Activated CD8-positive, alpha-beta T cell treated with anti-CD3 and anti-CD28 coated beads for 36 hours (primary cell): ENCODE measurements at regions of chr6 and their contacts with region 1.

Region 1: GRCh38 chr6:45486736-45487135 is 109.0 kb upstream of the SUPT3H start:
- DNase-seq: peak; percentile 55
- ATAC-seq: peak; percentile 90
- H3K4me3 Mint-ChIP-seq: peak overlapping the region; percentile 45
- H3K27ac Mint-ChIP-seq: peak overlapping the region; percentile 80
- H3K4me1 Mint-ChIP-seq: peaks cover 35% of the 10 kb centered on the region
- H3K27me3 Mint-ChIP-seq: no peaks in the 10 kb centered on the region
- CTCF ChIP-seq: no peak

Region 2: DNA sequence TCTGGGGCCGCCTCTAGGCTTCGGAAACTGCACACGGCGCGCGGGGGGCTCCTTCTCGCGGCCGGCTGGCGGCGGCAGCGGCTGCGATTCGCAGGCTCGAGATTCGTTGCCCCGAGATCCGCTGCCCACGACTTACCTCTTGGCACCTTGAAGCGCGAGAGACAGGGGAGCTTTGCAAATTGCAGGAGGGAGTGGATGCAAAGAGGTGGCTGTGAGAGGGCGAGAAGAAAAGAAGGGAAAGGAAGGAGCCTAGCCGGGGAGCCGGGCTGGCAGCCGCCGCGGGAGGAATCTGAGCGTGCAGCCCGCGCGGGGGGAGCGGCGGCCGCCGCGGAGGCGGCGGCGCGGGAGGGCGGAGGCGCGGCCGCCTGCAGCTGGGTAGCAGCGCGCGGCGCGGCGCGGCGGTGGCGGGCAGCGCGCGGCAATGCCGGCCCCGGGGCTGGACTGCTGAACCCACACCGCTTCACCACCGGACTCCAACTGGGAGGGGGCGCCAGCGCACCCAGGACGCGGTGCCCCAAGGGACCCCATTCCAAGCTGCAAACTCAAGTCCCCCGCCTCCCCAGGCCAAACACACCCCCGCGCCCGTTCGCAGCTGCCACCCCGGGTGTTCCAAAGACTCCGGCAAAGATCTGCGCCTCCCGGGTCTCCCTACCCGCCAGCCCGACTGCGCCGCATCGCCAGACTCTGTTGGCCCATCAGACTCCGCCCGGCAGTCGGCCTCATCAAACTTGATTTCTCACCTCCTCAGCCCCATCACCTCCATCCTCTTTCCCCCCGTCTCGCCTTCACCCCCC is 64.8 kb before region 1 on chr6:
- CTCF ChIA-PET with region 1: interaction called, 6 read pairs
- POLR2A ChIA-PET with region 1: no interaction called
- intact Hi-C with region 1: loop called (anchors 5 kb)
- DNase-seq: peak; percentile 71
- ATAC-seq: peak; percentile 25
- H3K4me3 Mint-ChIP-seq: peak overlapping the region; percentile 94
- H3K27ac Mint-ChIP-seq: peak overlapping the region; percentile 95
- H3K4me1 Mint-ChIP-seq: peaks cover 29% of the 10 kb centered on the region
- H3K27me3 Mint-ChIP-seq: no peaks in the 10 kb centered on the region
- CTCF ChIP-seq: no peak

Region 3: DNA sequence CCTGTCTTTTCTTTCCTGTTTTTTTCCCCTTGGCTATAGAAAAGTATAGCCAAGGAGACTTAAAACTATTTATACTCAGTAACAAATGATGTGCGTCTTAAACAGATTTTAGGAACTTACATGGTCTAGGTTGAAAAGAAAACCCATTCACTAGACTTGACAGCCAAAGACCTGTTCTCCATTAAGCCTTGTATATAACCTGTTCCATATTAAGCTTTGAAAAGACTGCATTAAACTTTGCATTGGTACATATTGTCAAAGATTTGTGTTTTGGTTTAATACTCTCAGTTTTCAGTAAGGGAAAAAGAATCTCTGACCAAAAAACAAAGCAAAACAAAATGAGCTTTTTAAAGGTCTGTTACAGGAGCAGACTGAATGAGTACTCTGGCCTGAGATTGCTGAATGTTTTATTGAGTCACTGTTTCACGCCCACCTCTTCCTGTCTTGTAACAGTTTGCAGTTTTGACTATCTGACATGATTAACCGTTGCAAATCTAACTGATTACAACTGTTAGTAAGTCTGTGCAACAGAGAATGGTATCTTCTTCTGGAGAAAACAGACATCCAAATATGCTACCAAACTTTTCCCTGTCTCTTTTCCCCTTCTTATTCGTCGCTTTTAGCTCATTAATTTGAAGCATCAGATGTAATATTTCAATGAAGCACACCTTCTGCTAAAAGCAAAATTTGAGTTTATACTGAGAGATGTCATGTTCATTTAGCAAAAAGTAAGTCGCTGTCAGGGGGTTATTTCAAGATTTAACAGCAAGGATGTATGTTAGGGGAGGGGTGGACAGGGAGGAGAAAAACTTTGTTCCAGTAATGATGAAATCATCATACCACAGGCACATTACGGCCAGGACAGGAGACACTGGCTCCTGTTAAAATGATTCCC is 49.9 kb before region 1 on chr6:
- CTCF ChIA-PET with region 1: interaction called, 3 read pairs
- POLR2A ChIA-PET with region 1: interaction called, 3 read pairs
- intact Hi-C with region 1: loop called (anchors 5 kb)
- DNase-seq: peak; percentile 77
- ATAC-seq: peak; percentile 95
- H3K4me3 Mint-ChIP-seq: peak overlapping the region; percentile 27
- H3K27ac Mint-ChIP-seq: peak overlapping the region; percentile 84
- H3K4me1 Mint-ChIP-seq: peaks cover 67% of the 10 kb centered on the region
- H3K27me3 Mint-ChIP-seq: no peaks in the 10 kb centered on the region
- CTCF ChIP-seq: no peak

Region 4: GRCh38 chr6:45783716-45784115 is 297.0 kb after region 1 on chr6:
- CTCF ChIA-PET with region 1: no interaction called
- POLR2A ChIA-PET with region 1: no interaction called
- intact Hi-C with region 1: no loop called
- DNase-seq: no peak
- ATAC-seq: no peak
- H3K4me3 Mint-ChIP-seq: no peak overlapping the region
- H3K27ac Mint-ChIP-seq: no peak overlapping the region
- H3K4me1 Mint-ChIP-seq: no peaks in the 10 kb centered on the region
- H3K27me3 Mint-ChIP-seq: no peaks in the 10 kb centered on the region
- CTCF ChIP-seq: no peak